Activated CD4-positive, alpha-beta T cell treated with anti-CD3 and anti-CD28 coated beads, Interleukin-2, amount 10 ng/mL, durations not matched to agents 7 days and 5 days (primary cell): ENCODE measurements at regions of chr5 and their contacts with region 1.

Region 1: GRCh38 chr5:179806250-179807222 is at the start of gene MGAT4B:
- DNase-seq: peak; percentile 64
- H3K4me3 Mint-ChIP-seq: peak within 1 kb of the TSS; percentile 74
- H3K27ac Mint-ChIP-seq: peak within 1 kb of the TSS; percentile 83
- H3K4me1 Mint-ChIP-seq: peaks cover 31% of the 10 kb centered on the region
- H3K27me3 Mint-ChIP-seq: no peaks in the 10 kb centered on the region
- total RNA-seq, gene MGAT4B: 86.2 to 87.7 TPM

Region 2: DNA sequence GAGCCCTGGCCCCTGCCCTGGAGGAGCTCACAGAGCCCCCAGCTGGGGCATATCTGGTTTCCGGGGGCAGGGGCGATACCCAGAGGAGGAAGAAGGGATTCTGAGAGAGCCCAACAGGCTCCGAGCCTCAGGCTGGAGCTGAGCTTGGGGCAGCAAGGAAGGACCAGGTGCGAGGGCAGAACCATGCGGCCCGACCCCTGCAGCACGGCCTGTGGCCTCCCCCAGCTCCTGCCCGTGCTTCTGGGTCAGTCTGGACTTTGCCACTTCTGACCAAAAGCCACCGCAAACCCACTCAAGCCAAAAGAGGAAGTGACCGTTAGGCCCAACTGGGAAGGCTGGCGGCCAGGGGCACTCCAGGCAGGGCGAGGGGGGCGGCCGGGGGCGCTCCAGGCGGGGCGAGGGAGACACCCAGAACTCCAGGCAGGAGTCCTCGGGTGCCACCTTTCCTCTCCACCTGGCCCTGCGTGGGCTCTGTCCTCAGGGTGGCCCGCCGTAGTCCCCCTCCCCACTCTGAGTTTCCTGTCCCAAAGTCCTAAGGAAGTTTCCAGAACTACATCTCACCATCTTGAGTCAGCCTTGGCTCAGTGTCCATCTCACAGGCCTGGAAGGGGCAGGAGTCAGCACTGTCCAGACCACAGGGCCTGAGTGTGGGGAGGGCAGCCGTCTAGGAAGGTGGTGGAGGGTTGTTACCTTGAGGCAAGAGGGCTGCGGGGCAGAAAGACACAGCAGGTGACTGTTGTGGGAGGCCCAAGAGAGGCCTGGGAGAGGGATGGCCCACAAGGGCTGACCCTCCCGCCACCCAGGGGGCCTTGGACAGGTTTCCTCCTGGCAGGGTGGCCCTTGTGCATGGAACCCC is 13.7 kb before region 1 on chr5:
- CTCF ChIA-PET with region 1: interaction called, 13 read pairs
- POLR2A ChIA-PET with region 1: no interaction called
- DNase-seq: no peak
- H3K4me3 Mint-ChIP-seq: no peak overlapping the region
- H3K27ac Mint-ChIP-seq: peak overlapping the region; percentile 80
- H3K4me1 Mint-ChIP-seq: peaks cover 35% of the 10 kb centered on the region
- H3K27me3 Mint-ChIP-seq: no peaks in the 10 kb centered on the region

Region 3: DNA sequence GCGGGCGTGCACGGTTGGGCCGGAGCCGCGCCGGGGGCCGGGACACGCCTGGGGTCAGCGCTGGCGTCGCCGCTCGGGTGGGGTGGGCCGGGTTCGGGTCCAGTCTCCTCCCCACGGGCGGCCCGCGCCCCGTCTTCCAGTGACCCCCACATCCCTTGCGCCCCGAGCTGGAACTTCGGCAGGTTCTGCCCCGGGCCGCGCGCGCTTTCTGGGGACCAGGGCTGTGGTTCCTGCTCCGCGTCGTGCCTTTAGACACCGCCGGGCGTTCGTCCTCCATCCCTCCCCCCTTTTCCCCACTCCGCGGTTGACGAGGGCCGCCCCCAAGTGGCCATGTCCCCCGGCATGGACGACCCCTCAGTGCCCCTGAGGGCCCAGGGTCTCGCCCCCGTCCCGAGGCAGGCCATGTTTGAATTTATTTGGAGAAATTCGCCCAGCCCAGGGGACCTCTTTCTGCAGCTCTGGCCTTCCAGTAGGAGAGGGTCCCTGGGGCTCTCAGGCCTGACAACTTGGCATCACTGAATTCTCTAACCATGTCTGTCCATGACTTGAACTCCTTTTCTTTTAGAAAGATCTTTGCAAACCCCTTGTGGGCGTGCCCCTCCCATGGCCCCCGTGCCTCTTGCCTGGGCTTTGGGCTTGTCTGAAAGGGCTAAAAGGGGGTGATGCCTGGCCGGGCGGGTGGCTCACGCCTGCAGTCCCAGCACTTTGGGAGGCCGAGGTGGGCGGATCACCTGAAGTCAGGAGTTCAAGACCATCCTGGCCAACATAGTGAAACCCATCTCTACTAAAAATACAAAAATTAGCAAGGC is 10.7 kb after region 1 on chr5:
- CTCF ChIA-PET with region 1: interaction called, 11 read pairs
- POLR2A ChIA-PET with region 1: no interaction called
- DNase-seq: no peak
- H3K4me3 Mint-ChIP-seq: no peak overlapping the region
- H3K27ac Mint-ChIP-seq: peak overlapping the region; percentile 88
- H3K4me1 Mint-ChIP-seq: peaks cover 36% of the 10 kb centered on the region
- H3K27me3 Mint-ChIP-seq: no peaks in the 10 kb centered on the region

Region 4: DNA sequence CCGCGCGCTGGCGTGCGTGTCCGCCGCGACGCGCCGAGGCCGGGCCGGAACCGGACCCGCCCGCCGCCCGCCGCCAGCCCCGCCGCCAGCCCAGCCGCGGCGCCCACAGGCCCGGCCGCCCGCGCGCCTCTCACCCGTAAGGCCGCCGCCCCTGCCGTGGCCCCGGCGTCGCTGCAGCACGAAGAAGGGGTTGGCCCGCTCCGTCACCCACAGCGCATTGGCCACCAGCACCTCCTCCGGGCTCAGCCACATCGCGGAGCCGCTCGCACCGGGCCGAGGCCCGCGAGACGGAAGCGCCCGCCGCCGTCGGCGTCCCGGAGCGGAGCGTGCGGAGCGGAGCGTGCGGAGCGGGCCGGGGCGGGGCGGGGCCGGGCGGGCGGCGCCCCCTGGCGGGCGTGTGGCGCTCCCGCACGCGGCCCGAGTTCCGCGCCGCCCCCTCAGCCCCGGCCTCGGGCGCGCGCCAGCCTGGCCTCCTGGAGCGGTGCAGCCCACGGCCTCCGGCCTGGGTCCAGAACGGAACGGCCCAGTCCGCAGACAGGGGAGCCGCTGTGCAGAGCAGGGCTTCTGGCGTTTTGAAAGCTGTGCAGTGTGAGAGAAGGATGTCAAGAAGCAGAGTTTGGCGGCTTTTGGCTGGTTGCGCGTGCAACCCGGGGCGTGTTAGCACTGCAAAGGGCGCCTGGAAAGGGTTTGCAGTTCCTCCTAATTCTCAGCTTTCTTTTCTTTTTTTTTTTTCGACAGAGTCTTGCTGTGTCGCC is 101.2 kb after region 1 on chr5 and contains the start of gene TBC1D9B:
- CTCF ChIA-PET with region 1: interaction called, 6 read pairs
- POLR2A ChIA-PET with region 1: interaction called, 15 read pairs
- DNase-seq: peak; percentile 66
- H3K4me3 Mint-ChIP-seq: peak within 1 kb of the TSS; percentile 82
- H3K27ac Mint-ChIP-seq: peak within 1 kb of the TSS; percentile 85
- H3K4me1 Mint-ChIP-seq: peaks cover 22% of the 10 kb centered on the region
- H3K27me3 Mint-ChIP-seq: no peaks in the 10 kb centered on the region
- total RNA-seq, gene TBC1D9B: 86.4 to 92.9 TPM

Region 5: GRCh38 chr5:180209137-180209581 is 402.6 kb after region 1 on chr5 and contains the start of gene RASGEF1C:
- CTCF ChIA-PET with region 1: no interaction called
- POLR2A ChIA-PET with region 1: no interaction called
- DNase-seq: peak; percentile 61
- H3K4me3 Mint-ChIP-seq: peak within 1 kb of the TSS; percentile 43
- H3K27ac Mint-ChIP-seq: no peak within 1 kb of the TSS
- H3K4me1 Mint-ChIP-seq: peaks cover 7% of the 10 kb centered on the region
- H3K27me3 Mint-ChIP-seq: peaks cover 28% of the 10 kb centered on the region
- total RNA-seq, gene RASGEF1C: not detected